ENCODE measurements at regions of chr3 and their contacts with region 1.

Region 1: DNA sequence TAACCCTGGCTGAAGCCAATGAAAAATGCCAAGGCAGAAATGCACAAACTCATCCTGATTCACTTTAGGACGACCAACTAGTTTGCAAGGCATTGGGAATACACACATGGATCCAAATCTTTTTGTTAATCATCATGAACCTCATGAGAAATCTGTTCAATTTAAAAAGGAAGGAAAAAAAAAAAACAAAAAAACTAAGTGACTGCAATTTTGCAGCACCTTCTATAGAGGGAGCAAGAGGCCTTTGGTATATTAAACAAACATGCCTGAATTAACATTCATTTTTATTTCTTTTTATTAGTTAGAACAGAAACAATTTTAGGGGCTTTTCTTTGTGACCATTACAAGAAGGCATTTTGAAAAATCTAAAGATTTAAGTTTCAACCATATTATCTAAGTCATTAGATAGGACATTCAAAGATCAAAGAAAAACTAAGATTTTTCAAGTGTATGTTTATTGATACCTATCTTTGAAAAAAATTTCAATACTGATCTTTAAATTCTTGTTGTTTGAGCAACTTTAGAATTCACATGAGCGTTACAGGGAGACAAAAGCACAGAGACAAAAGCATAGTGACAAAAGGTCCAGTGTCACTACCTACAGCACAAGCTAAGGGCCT is 182.4 kb downstream of the CBLB start:
- DNase-seq: peak in 6 of 9 donors; percentile 17 to 57 (median 48)
- ATAC-seq: peak; percentile 76
- H3K4me3 ChIP-seq: no peak overlapping the region
- H3K4me3 Mint-ChIP-seq: no peak overlapping the region
- H3K27ac ChIP-seq: no peak overlapping the region
- H3K27ac Mint-ChIP-seq: peak overlapping the region in 8 of 9 donors; percentile 18 to 59 (median 48)
- H3K4me1 ChIP-seq: peaks cover 4 to 5% of the 10 kb centered on the region in 2 donors
- H3K4me1 Mint-ChIP-seq: peaks cover 14 to 37% (median 29%) of the 10 kb centered on the region in 7 donors
- H3K27me3 ChIP-seq: no peaks in the 10 kb centered on the region
- H3K27me3 Mint-ChIP-seq: no peaks in the 10 kb centered on the region

Region 2: GRCh38 chr3:105700575-105700974 is 14.2 kb after region 1 on chr3:
- CTCF ChIA-PET with region 1: interaction called, 9 read pairs
- POLR2A ChIA-PET with region 1: no interaction called
- intact Hi-C with region 1: loop called in 1 of 2 experiments (anchors 1 kb)
- DNase-seq: no peak
- ATAC-seq: no peak
- H3K4me3 ChIP-seq: no peak overlapping the region
- H3K4me3 Mint-ChIP-seq: peak overlapping the region in 1 of 10 donors; percentile 10
- H3K27ac ChIP-seq: no peak overlapping the region
- H3K27ac Mint-ChIP-seq: peak overlapping the region in 7 of 9 donors; percentile 2 to 80 (median 28)
- H3K4me1 ChIP-seq: peaks cover 0 to 16% of the 10 kb centered on the region in 2 donors
- H3K4me1 Mint-ChIP-seq: peaks cover 9 to 55% (median 42%) of the 10 kb centered on the region in 7 donors
- H3K27me3 ChIP-seq: no peaks in the 10 kb centered on the region
- H3K27me3 Mint-ChIP-seq: no peaks in the 10 kb centered on the region

Region 3: GRCh38 chr3:106119614-106120082 is 433.3 kb after region 1 on chr3:
- CTCF ChIA-PET with region 1: no interaction called
- POLR2A ChIA-PET with region 1: no interaction called
- intact Hi-C with region 1: loop called in 1 of 2 experiments (anchors 1 kb)
- DNase-seq: no peak
- ATAC-seq: no peak
- H3K4me3 ChIP-seq: no peak overlapping the region
- H3K4me3 Mint-ChIP-seq: no peak overlapping the region
- H3K27ac ChIP-seq: no peak overlapping the region
- H3K27ac Mint-ChIP-seq: no peak overlapping the region
- H3K4me1 ChIP-seq: no peaks in the 10 kb centered on the region
- H3K4me1 Mint-ChIP-seq: peaks cover 0 to 21% (median 10%) of the 10 kb centered on the region in 7 donors
- H3K27me3 ChIP-seq: no peaks in the 10 kb centered on the region
- H3K27me3 Mint-ChIP-seq: peaks cover 0 to 4% (median 0%) of the 10 kb centered on the region in 5 donors

Region 4: GRCh38 chr3:106144030-106144429 is 457.6 kb after region 1 on chr3:
- CTCF ChIA-PET with region 1: no interaction called
- POLR2A ChIA-PET with region 1: no interaction called
- intact Hi-C with region 1: no loop called
- DNase-seq: no peak
- ATAC-seq: no peak
- H3K4me3 ChIP-seq: no peak overlapping the region
- H3K4me3 Mint-ChIP-seq: no peak overlapping the region
- H3K27ac ChIP-seq: no peak overlapping the region
- H3K27ac Mint-ChIP-seq: no peak overlapping the region
- H3K4me1 ChIP-seq: no peaks in the 10 kb centered on the region
- H3K4me1 Mint-ChIP-seq: peaks cover 0 to 11% (median 0%) of the 10 kb centered on the region in 7 donors
- H3K27me3 ChIP-seq: no peaks in the 10 kb centered on the region
- H3K27me3 Mint-ChIP-seq: no peaks in the 10 kb centered on the region

Region 5: GRCh38 chr3:106333911-106334618 is 647.7 kb after region 1 on chr3:
- CTCF ChIA-PET with region 1: no interaction called
- POLR2A ChIA-PET with region 1: no interaction called
- intact Hi-C with region 1: loop called (anchors 5 kb)
- DNase-seq: peak in 1 of 9 donors; percentile 45
- ATAC-seq: peak; percentile 47
- H3K4me3 ChIP-seq: no peak overlapping the region
- H3K4me3 Mint-ChIP-seq: peak overlapping the region in 1 of 10 donors; percentile 73
- H3K27ac ChIP-seq: no peak overlapping the region
- H3K27ac Mint-ChIP-seq: peak overlapping the region in 3 of 9 donors; percentile 47 to 86 (median 62)
- H3K4me1 ChIP-seq: peaks cover 0 to 47% of the 10 kb centered on the region in 2 donors
- H3K4me1 Mint-ChIP-seq: peaks cover 19 to 69% (median 38%) of the 10 kb centered on the region in 7 donors
- H3K27me3 ChIP-seq: no peaks in the 10 kb centered on the region
- H3K27me3 Mint-ChIP-seq: no peaks in the 10 kb centered on the region

Region 6: GRCh38 chr3:106609666-106610301 is 923.4 kb after region 1 on chr3:
- CTCF ChIA-PET with region 1: interaction called, 22 read pairs
- POLR2A ChIA-PET with region 1: no interaction called
- intact Hi-C with region 1: loop called (anchors 1 kb)
- DNase-seq: peak in 8 of 9 donors; percentile 37 to 71 (median 60)
- ATAC-seq: peak; percentile 81
- H3K4me3 ChIP-seq: no peak overlapping the region
- H3K4me3 Mint-ChIP-seq: no peak overlapping the region
- H3K27ac ChIP-seq: no peak overlapping the region
- H3K27ac Mint-ChIP-seq: no peak overlapping the region
- H3K4me1 ChIP-seq: no peaks in the 10 kb centered on the region
- H3K4me1 Mint-ChIP-seq: peaks cover 0 to 12% (median 0%) of the 10 kb centered on the region in 7 donors
- H3K27me3 ChIP-seq: no peaks in the 10 kb centered on the region
- H3K27me3 Mint-ChIP-seq: peaks cover 0 to 4% (median 3%) of the 10 kb centered on the region in 5 donors

Region 7: DNA sequence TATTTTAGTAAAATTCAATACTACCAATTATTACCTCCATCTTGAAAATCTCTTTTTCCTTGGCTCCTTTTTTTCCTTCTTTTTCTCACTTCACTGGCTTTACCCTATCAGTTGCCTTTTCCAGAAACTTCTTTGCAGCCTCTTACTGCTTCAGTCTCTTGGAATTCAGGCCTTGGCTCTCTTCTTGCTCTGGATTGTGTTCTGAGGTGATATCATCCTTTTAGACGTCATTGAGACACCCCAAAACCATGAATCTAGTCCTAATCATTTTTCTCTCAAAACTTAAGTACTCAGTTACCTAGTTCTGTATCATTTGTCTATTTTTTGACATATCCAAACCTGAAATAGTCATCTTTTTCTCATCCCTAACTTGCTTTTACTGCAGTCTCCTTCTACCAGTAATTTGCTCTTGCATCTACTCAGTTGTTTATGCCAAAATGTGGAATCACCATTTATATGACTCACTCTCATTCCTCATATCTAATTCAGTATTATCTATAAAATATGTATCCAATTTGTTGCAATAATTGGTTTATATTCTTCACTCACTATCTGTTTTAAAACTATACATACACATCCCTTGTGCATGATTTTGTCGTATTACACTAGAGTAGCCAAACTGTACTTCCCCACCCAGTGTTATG is 987.7 kb after region 1 on chr3:
- CTCF ChIA-PET with region 1: no interaction called
- POLR2A ChIA-PET with region 1: no interaction called
- intact Hi-C with region 1: no loop called
- DNase-seq: no peak
- ATAC-seq: no peak
- H3K4me3 ChIP-seq: no peak overlapping the region
- H3K4me3 Mint-ChIP-seq: no peak overlapping the region
- H3K27ac ChIP-seq: no peak overlapping the region
- H3K27ac Mint-ChIP-seq: no peak overlapping the region
- H3K4me1 ChIP-seq: no peaks in the 10 kb centered on the region
- H3K4me1 Mint-ChIP-seq: no peaks in the 10 kb centered on the region
- H3K27me3 ChIP-seq: no peaks in the 10 kb centered on the region
- H3K27me3 Mint-ChIP-seq: peaks cover 0 to 3% (median 0%) of the 10 kb centered on the region in 5 donors